MCF 10A (cell line): ENCODE measurements at regions of chr2 and their contacts with region 1.

Region 1: DNA sequence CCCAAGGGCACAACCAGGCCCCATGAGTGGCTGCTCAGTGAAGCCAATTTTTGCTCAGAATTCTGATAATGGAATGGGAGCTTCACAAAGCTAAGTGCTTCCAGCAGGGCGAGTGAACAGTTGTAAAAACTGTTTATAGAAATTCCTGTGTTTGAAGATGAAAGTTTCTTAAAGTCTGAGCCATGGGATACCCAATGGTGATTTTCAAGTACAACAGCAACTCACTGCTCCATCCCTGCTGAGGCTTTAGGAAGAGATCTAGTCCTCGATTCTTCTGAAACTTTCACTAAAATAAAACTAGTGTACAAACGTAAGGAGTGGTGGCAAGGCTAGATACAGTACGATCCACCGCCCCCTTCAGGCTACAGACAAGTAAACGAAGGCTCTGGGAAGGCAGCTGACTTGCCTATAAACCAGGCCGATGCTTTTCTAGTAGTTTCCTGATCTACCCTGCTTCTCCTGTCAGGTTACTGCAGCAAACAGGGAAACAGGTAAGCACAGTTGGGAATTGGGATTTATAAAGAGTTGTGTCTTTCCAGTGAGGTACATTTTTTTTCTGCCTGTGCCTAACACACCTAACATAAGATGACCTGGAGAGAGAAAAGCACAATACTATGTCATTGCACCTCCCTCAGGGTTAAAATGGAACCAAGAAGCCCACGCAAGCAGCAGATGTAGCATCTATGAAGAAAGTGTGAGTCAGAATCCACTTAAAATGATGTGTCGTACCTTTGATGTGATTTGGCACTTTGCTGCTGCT is 108.7 kb downstream of the UXS1 start:
- DNase-seq: peak; percentile 45
- H3K4me3 Mint-ChIP-seq: no peak overlapping the region
- H3K27ac Mint-ChIP-seq: no peak overlapping the region
- H3K4me1 Mint-ChIP-seq: no peaks in the 10 kb centered on the region
- H3K27me3 Mint-ChIP-seq: no peaks in the 10 kb centered on the region
- CTCF ChIP-seq: peak; percentile 11

Region 2: GRCh38 chr2:105744091-105744908 is 341.1 kb before region 1 on chr2:
- CTCF ChIA-PET with region 1: interaction called, 3 read pairs
- POLR2A ChIA-PET with region 1: no interaction called
- intact Hi-C with region 1: loop called (anchors 5 kb)
- DNase-seq: peak; percentile 52
- H3K4me3 Mint-ChIP-seq: peak overlapping the region; percentile 79
- H3K27ac Mint-ChIP-seq: peak overlapping the region; percentile 58
- H3K4me1 Mint-ChIP-seq: peaks cover 22% of the 10 kb centered on the region
- H3K27me3 Mint-ChIP-seq: no peaks in the 10 kb centered on the region
- CTCF ChIP-seq: no peak

Region 3: DNA sequence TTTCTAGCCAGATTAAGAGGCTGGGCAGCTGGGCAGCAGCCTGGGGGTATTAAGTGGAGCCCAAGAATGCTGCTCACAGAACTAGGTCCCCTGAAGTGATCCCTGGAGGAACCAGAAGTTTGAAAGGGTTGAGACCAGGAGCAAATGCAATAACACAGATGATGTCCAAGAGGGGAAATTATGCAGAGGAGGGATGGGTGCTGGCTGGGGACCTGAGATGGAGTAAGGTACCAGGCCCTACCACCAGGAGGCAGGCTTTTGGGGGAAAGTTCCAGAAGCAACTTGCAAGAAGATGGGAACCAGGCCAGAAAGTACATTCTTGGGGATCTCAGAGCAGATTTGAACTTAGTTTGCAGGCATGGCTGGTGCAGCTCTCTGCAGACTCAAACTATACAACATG is 165.5 kb before region 1 on chr2:
- CTCF ChIA-PET with region 1: no interaction called
- POLR2A ChIA-PET with region 1: no interaction called
- intact Hi-C with region 1: loop called (anchors 5 kb)
- DNase-seq: peak; percentile 50
- H3K4me3 Mint-ChIP-seq: no peak overlapping the region
- H3K27ac Mint-ChIP-seq: no peak overlapping the region
- H3K4me1 Mint-ChIP-seq: peaks cover 9% of the 10 kb centered on the region
- H3K27me3 Mint-ChIP-seq: peaks cover 8% of the 10 kb centered on the region
- CTCF ChIP-seq: peak; percentile 49